ENCODE measurements at regions of chr17 and their contacts with region 1.

Region 1: GRCh38 chr17:47789611-47790561 is 31.7 kb downstream of the OSBPL7 start:
- DNase-seq: no peak
- H3K4me3 ChIP-seq: peak overlapping the region; percentile 14 to 65 (median 44)
- H3K27ac ChIP-seq: no peak overlapping the region
- H3K4me1 ChIP-seq: peaks cover 8 to 12% (median 9%) of the 10 kb centered on the region in 3 donors
- H3K27me3 ChIP-seq: peaks cover 0 to 93% (median 18%) of the 10 kb centered on the region in 4 donors
- CTCF ChIP-seq: peak in 5 of 6 experiments; percentile 19 to 57 (median 34)
- POLR2A ChIP-seq: no peak

Region 2: DNA sequence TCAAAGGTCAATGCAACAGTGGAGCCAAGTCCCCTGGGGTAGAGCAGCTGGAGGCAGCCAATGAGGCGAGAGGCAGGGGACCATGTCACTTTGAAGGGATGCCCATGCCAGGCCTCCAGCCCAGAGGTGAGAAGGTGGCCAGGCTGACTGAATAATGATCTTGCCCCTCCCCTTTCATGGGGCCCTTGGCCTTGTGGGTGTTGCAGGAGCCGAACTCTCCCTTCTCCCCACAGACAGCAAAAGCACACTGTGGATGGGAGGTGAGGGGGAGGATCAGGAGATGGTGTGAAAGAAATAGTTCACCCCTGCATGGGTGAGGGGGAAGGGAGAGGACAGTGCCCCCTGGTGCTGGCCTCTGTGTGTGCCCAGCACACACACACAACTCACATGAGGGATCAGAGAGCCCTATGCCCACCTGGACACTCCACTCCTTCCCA is 72.6 kb before region 1 on chr17:
- intact Hi-C with region 1: loop called (anchors 10 kb)
- DNase-seq: no peak
- H3K4me3 ChIP-seq: no peak overlapping the region
- H3K27ac ChIP-seq: no peak overlapping the region
- H3K4me1 ChIP-seq: peaks cover 10 to 24% (median 12%) of the 10 kb centered on the region in 3 donors
- H3K27me3 ChIP-seq: peaks cover 0 to 83% (median 8%) of the 10 kb centered on the region in 4 donors
- CTCF ChIP-seq: peak in 2 of 6 experiments; percentile 8 to 18
- POLR2A ChIP-seq: no peak

Measured in esophagus squamous epithelium (tissue), 5 donors.